ENCODE measurements at regions of chr5 and their contacts with region 1.

Region 1: GRCh38 chr5:139648205-139649081 is at the start of gene CXXC5:
- H3K4me3 ChIP-seq: peak within 1 kb of the TSS; percentile 79
- H3K27ac ChIP-seq: peak within 1 kb of the TSS; percentile 82; the same call in 1 of the 2 replicates
- H3K4me1 ChIP-seq: peaks cover 28% of the 10 kb centered on the region
- CTCF ChIP-seq: no peak

Region 2: DNA sequence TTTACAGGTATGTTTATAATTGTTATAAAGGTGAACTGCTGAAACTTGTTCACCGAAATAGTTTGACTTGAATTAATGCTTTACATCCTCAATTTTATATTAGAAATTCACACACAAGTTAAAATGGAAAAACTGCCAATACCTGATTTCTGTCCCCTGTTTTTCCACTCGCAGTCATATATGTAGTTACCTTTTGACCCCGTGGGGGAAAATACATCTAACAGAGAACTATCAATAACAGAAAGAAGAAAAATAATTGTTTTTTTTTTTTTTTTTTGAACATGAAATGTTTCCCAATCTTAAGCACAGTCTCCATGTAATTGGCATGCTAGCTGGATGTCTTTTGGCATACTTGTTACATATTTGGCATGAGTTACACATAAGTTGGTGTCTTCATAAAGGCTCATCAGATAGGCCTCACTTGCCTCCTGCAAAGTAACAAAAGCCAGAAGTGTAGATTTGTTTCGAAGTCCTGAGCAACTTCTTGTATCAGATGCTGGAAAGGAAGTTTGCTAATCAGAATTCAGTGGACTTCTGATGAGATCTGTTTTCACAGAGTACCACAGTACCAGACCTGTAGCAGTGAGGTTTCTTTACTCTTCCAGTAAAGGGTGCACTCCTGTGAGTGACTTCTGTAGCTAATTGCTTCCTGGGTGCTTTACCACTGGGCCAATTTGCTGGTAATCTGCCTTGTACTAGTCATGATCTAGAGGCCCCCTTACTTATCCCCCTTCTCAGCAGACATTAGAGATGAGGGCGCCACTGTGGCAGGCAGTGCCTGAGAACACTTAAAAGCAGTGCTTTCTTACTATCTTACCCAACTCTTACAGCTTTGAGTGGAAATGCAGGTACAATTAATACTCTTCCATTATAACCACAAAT is 36.5 kb before region 1 on chr5:
- CTCF ChIA-PET with region 1: no interaction called
- POLR2A ChIA-PET with region 1: no interaction called
- H3K4me3 ChIP-seq: no peak overlapping the region
- H3K27ac ChIP-seq: no peak overlapping the region
- H3K4me1 ChIP-seq: no peaks in the 10 kb centered on the region
- CTCF ChIP-seq: no peak

Region 3: DNA sequence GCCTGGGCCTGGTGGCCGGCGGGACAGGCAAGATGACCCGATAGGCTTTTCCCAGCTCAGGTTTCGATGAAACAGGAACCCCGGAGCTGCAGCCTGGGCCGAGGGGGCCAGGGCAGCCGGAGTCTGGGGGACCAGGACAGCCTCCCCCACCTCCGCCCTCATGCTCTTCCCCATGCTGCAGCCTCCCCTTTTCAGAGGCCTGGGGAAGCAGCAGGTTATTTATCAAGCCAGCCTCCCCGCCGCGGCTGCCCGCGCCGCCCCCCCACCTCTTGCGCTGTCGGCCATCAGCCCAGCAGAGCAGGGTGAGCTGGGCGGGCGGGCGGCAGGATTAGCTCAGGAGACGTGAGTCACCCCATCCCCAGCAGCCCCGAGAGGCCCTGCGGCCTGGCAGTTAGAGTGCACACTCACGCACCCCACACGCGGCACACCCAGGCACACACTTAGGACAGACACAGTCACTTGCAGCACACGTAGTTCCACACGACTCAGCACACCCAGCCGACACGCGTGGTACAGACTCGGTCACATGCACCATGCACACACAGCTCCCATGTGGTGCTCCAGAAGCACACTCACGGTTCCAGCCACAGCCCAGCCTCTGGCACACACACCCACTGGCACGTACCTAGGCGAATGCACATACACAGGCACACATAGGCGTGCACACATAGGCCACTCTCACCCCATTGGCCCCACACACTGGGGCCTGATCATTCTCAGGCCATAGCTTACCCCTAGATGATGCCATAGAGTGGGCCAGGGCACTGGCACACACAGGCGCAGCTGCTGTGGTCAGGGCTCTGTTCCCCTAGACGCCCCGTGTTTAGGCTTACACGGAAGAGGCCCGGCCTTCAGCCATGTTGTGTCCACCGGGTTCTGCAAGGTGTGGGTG is 12.7 kb after region 1 on chr5:
- CTCF ChIA-PET with region 1: no interaction called
- POLR2A ChIA-PET with region 1: interaction called, 11 read pairs
- H3K4me3 ChIP-seq: no peak overlapping the region; the same call in 1 of the 2 replicates
- H3K27ac ChIP-seq: peak overlapping the region; percentile 36; the same call in 1 of the 2 replicates
- H3K4me1 ChIP-seq: no peaks in the 10 kb centered on the region
- CTCF ChIP-seq: no peak